WTC11 (cell line): ENCODE measurements at regions of chr6 and their contacts with region 1.

Region 1: DNA sequence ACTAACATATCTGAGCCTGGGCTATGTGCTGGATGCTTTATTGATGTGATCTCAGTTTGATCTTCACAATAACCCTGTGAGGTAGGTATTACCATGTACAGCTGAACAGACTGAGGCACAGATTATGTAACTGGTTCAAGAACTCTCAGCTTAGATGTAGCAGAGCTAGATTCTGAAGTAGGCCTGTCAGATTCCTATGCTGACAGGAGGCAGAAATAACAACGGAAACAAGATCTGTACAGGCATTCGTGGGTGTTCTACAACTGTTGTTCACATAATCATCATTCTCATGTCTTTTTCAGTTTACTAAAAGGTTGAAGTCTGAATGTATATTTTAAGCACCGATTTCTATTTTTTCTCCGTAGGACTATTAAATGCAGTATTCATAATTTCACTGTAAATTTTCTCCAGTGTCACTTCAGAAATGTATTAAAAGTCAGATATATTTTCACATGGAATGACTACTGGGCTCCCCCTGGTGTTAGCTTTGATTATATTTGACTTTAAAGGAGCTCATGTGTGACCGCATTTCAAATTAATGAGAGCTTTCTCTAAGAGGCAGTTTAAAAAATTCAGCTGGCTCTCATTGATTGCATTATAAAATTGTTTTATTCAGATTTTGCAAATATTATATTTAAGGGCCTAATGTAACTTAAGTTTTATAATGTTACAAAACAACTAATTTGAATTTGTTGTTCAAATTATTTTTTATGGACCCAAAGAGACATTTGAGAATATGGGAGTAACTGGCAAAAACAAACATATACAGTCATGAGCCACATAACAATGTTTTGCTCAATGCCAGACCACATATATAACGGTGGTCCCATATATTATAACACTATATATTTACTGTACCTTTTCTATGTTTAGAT is 36.4 kb upstream of the SLC17A4 start:
- DNase-seq: no peak
- ATAC-seq: no peak
- H3K4me3 Mint-ChIP-seq: no peak overlapping the region
- H3K27ac Mint-ChIP-seq: no peak overlapping the region
- H3K4me1 Mint-ChIP-seq: peaks cover 4% of the 10 kb centered on the region; the same call in 1 of the 2 replicates
- H3K27me3 Mint-ChIP-seq: no peaks in the 10 kb centered on the region
- CTCF ChIP-seq: no peak; the same call in 1 of the 2 replicates

Region 2: GRCh38 chr6:25458485-25458884 is 259.6 kb before region 1 on chr6:
- CTCF ChIA-PET with region 1: no interaction called
- POLR2A ChIA-PET with region 1: no interaction called
- DNase-seq: no peak
- ATAC-seq: no peak
- H3K4me3 Mint-ChIP-seq: no peak overlapping the region
- H3K27ac Mint-ChIP-seq: no peak overlapping the region
- H3K4me1 Mint-ChIP-seq: peaks cover 31% of the 10 kb centered on the region
- H3K27me3 Mint-ChIP-seq: no peaks in the 10 kb centered on the region
- CTCF ChIP-seq: no peak

Region 3: DNA sequence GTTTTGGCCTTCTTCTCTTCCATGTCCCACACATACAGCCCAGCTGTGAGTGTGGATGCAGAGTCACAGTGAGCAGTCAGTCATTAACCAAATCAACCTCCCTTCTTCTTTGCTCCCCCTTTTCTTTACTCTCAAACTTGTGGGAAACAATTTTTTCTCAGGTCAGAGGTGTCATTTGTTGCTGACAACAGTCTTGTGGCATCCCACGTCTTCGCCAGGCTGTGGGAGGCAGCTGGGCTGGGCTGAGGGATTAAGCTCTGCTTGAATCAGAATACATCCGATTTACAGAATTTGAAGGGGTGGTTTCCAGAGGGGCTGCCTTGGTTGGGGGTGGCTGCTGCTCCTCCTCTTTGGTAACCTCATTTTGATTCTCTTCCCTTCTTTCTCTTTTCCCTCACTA is 25.6 kb before region 1 on chr6:
- CTCF ChIA-PET with region 1: interaction called, 14 read pairs
- POLR2A ChIA-PET with region 1: no interaction called
- DNase-seq: no peak
- ATAC-seq: peak; percentile 68
- H3K4me3 Mint-ChIP-seq: no peak overlapping the region
- H3K27ac Mint-ChIP-seq: no peak overlapping the region
- H3K4me1 Mint-ChIP-seq: peaks cover 13% of the 10 kb centered on the region
- H3K27me3 Mint-ChIP-seq: no peaks in the 10 kb centered on the region
- CTCF ChIP-seq: no peak

Region 4: GRCh38 chr6:25732468-25733198 is 14.5 kb after region 1 on chr6:
- CTCF ChIA-PET with region 1: interaction called, 28 read pairs
- POLR2A ChIA-PET with region 1: no interaction called
- DNase-seq: peak; percentile 73
- ATAC-seq: peak; percentile 90
- H3K4me3 Mint-ChIP-seq: peak overlapping the region; percentile 29
- H3K27ac Mint-ChIP-seq: no peak overlapping the region
- H3K4me1 Mint-ChIP-seq: peaks cover 8% of the 10 kb centered on the region; the same call in 1 of the 2 replicates
- H3K27me3 Mint-ChIP-seq: no peaks in the 10 kb centered on the region
- CTCF ChIP-seq: 0 out of 2 replicates have a peak, but pooled peaks have one; percentile 25

Region 5: DNA sequence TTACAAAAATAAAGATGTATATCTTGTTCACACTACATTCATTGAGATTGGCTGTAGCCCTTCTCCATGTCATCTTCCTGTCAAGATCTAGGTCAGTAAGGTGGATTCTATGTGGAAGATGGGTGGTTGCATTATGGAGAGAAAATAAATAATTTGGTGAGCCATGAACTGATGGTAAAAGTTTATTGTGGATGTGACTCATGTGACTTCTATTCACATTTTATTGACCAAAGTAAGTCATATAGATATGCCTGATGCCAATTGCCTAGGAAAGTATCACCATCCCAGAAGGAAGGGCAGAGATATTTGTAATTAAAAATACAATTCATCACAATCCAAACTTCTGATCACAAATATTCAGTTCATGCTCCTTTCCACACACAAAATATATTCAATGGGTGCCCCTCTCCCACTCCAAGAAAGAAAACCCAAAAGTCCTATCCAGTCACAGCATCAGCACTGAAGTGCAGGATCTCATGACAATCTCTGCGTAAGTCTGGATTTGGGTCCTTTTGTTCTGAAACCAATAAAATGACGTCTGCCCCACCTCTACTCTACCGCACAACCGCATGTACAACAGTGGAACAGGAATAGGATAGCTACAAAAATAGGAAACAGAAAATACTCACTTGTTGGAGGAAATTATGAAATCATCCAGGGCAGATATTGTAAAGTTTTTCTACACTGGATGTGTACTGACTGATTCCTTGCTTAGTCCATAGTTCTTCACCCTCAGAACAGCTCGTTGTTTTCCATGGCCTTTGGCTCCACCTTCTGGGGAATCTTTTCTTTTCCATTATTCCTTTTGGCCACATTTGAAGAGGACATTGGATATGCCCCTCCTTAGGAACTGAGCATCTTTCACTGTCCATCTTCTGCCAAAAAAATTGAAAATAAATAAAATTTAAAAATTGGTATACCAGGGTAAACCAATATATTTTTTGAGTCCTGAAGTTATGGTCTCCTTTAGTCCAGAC is 172.1 kb after region 1 on chr6:
- CTCF ChIA-PET with region 1: interaction called, 12 read pairs
- POLR2A ChIA-PET with region 1: no interaction called
- DNase-seq: no peak
- ATAC-seq: peak; percentile 84
- H3K4me3 Mint-ChIP-seq: no peak overlapping the region
- H3K27ac Mint-ChIP-seq: no peak overlapping the region
- H3K4me1 Mint-ChIP-seq: no peaks in the 10 kb centered on the region
- H3K27me3 Mint-ChIP-seq: no peaks in the 10 kb centered on the region
- CTCF ChIP-seq: peak; percentile 34